ENCODE measurements at regions of chr14 and their contacts with region 1.

Region 1: DNA sequence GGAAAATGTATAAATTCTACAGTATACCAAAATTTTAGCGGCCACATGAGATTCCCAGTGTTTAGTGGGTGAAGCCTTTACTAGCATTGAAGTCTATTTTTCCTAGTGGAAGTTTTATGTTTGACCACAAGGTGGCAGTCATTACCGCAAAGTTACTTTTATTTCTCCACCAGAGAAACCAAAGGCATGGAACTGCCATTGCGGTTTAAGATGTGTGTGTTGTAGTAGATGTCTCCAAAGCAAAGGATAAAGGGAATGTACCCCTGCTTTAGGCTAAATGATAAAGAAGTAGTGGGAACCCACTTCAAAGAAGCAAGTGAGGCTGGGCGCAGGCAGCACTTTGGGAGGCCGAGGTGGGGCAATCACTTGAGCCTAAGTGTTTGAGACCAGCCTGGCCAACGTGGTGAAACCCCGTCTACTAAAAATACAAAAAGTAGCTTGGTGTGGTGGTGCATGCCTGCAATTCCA is 140.5 kb downstream of the PRKCH start:
- DNase-seq: peak; percentile 68
- ATAC-seq: peak; percentile 79
- H3K4me3 ChIP-seq: no peak overlapping the region
- H3K27ac ChIP-seq: no peak overlapping the region
- H3K4me1 ChIP-seq: peaks cover 39% of the 10 kb centered on the region
- H3K27me3 ChIP-seq: no peaks in the 10 kb centered on the region; a peak in 1 of 5 replicates
- CTCF ChIP-seq: peak; percentile 79
- EP300 ChIP-seq: no peak
- POLR2A ChIP-seq: no peak
- RAD21 ChIP-seq: peak; percentile 81

Region 2: DNA sequence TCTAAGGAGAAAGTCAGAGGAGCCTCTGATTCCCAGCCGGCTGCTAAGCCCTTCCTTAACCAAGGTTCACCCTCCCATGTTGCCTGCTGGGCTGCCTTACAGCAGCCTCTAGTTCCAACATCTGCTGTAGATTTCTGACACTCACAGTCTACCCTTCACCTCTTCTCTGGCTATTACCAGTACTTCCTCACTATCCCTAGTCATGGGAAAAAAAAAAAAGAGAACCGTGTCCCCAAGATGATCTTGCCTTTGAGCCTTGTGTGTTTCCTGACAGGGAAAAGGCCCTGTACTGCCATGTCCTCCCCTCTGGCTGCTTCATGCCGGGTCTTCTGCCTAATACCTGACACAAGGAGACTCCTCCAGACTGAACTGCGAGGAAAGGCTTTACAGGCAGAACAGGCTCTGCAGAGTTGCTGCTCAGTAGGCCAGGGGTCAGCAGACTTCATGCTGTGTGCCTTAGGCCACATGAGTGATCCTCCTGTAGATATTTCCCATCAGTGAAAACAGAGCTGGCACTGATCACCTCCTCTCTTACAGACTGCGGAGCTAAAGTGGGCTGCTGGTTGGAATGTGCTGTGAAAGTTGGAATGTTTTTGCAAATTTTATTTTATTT is 93.6 kb before region 1 on chr14:
- CTCF ChIA-PET with region 1: no interaction called
- POLR2A ChIA-PET with region 1: no interaction called
- in situ Hi-C with region 1: no loop called
- intact Hi-C with region 1: no loop called
- DNase-seq: no peak
- ATAC-seq: no peak
- H3K4me3 ChIP-seq: no peak overlapping the region
- H3K27ac ChIP-seq: no peak overlapping the region
- H3K4me1 ChIP-seq: no peaks in the 10 kb centered on the region
- H3K27me3 ChIP-seq: no peaks in the 10 kb centered on the region; a peak in 1 of 5 replicates
- CTCF ChIP-seq: no peak
- EP300 ChIP-seq: no peak
- POLR2A ChIP-seq: no peak
- RAD21 ChIP-seq: no peak

Region 3: DNA sequence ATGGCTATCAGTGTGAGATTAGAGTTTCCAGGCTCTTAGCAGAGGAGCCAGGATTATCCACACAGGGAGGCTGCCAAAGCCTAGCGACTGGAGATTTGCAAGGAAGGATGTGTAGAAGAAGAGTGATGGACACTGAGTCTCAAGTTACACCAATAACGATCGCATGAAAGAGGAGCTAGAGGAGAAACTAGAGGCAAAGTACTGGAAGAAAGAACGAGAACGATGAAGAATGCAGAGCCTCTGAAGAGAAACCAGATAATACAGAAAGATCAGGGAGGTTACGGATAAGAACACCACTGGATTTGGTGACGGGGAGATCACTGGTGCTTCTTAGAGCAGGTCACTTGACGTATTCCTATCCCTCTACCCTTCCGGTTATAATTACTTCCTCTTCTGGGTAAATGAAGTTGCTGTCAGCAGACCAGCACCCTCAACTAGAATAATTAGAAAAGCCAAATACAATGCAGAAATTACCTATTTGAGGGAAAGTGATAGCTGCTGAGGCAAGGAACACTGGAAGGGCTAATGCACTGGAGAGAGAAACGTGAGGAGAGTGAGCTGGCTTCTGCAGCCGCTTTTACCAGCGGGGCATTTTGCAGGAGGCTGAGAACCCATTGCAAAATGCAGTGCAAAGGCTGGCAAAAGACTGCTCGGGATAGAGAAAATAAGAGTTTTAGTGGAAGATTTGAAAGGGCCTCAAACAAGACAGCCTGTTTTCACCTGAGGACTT is 140.3 kb after region 1 on chr14:
- CTCF ChIA-PET with region 1: no interaction called
- POLR2A ChIA-PET with region 1: no interaction called
- in situ Hi-C with region 1: no loop called
- intact Hi-C with region 1: loop called (anchors 2 kb)
- DNase-seq: no peak
- ATAC-seq: peak; percentile 77
- H3K4me3 ChIP-seq: peak overlapping the region; percentile 14 to 32 (median 28); a peak in 4 of 6 replicates
- H3K27ac ChIP-seq: peak overlapping the region; percentile 80
- H3K4me1 ChIP-seq: peaks cover 59% of the 10 kb centered on the region
- H3K27me3 ChIP-seq: no peaks in the 10 kb centered on the region
- CTCF ChIP-seq: no peak
- EP300 ChIP-seq: no peak
- POLR2A ChIP-seq: no peak
- RAD21 ChIP-seq: no peak

Region 4: GRCh38 chr14:61730756-61731373 is 269.0 kb after region 1 on chr14:
- CTCF ChIA-PET with region 1: interaction called, 26 read pairs
- POLR2A ChIA-PET with region 1: no interaction called
- in situ Hi-C with region 1: loop called (anchors 5 kb)
- intact Hi-C with region 1: loop called (anchors 1 kb)
- DNase-seq: no peak
- ATAC-seq: no peak
- H3K4me3 ChIP-seq: no peak overlapping the region
- H3K27ac ChIP-seq: no peak overlapping the region
- H3K4me1 ChIP-seq: no peaks in the 10 kb centered on the region
- H3K27me3 ChIP-seq: no peaks in the 10 kb centered on the region
- CTCF ChIP-seq: peak; percentile 25; the same call in 1 of the 2 replicates
- EP300 ChIP-seq: no peak
- POLR2A ChIP-seq: no peak
- RAD21 ChIP-seq: 0 out of 2 replicates have a peak, but pooled peaks have one; percentile 15

Measured in HepG2 (cell line).